AG04449 (cell line): ENCODE measurements at regions of chr3 and their contacts with region 1.

Region 1: DNA sequence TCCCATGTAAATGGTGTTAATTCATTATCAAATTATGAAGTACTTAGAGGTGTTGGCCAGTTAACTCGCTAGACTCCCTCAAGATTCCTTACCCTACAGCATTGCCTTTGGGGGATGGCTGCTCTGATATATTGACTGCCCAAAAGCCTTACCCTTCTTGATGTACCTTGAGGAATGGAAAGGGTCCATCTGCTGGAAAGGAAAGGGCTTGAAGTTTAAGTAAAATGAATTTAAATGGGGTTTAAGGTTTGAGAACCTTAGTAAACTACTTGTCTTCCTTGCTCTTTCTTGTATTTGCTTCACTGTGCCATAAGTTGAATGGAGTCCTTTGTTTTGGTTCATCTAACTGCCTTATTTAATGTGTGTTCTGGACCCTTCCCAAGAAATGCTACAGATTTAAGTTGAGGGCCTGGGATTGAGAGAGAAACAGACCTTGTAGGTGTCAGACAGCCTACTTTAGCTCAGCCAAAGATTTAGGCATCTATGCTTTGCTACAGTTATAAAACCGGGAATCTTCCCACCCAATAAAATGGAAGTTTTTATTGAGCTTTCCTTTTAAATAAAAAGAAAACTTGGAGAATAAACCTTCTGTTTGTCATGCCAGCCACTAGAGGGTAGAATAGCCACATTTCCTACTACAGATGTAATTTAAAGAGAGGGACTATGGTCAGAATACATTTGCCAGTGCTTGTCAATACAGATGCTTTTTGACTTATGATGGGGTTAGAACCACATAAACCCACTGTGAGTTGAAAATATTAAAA is 25.3 kb downstream of the CMSS1 start:
- DNase-seq: no peak
- H3K4me3 ChIP-seq: no peak overlapping the region
- CTCF ChIP-seq: peak; percentile 51

Region 2: DNA sequence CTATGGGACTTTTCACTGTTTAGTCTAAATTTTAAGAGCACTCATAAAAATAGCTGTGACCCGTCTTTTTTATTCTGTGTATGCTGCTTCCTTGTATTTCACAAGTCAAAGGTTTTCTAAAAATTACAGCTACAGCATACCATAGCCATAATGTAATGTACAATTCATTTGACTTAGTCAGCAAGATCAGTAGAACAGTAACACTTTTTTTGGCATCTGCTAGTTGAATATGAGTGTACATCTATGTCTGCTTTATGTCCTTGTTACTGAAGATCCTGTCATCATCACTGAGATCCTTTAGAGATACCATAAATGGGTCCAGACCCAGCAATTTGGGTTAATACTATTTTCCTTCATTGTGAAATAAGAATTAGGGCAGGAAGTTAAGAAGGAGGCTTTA is 16.8 kb after region 1 on chr3:
- CTCF ChIA-PET with region 1: interaction called, 20 read pairs
- POLR2A ChIA-PET with region 1: no interaction called
- DNase-seq: peak; percentile 98
- H3K4me3 ChIP-seq: no peak overlapping the region
- CTCF ChIP-seq: no peak

Region 3: GRCh38 chr3:100030346-100030745 is 187.3 kb after region 1 on chr3:
- CTCF ChIA-PET with region 1: interaction called, 12 read pairs
- POLR2A ChIA-PET with region 1: interaction called, 4 read pairs
- DNase-seq: no peak
- H3K4me3 ChIP-seq: no peak overlapping the region
- CTCF ChIP-seq: no peak

Region 4: GRCh38 chr3:100068826-100069225 is 225.8 kb after region 1 on chr3:
- CTCF ChIA-PET with region 1: interaction called, 15 read pairs
- POLR2A ChIA-PET with region 1: no interaction called
- DNase-seq: no peak
- H3K4me3 ChIP-seq: no peak overlapping the region
- CTCF ChIP-seq: peak; percentile 76

Region 5: GRCh38 chr3:100254168-100254777 is 411.3 kb after region 1 on chr3:
- CTCF ChIA-PET with region 1: interaction called, 44 read pairs
- POLR2A ChIA-PET with region 1: no interaction called
- DNase-seq: peak; percentile 44
- H3K4me3 ChIP-seq: no peak overlapping the region
- CTCF ChIP-seq: peak; percentile 64